Left colon (tissue), 2 donors: ENCODE measurements at regions of chr4 and their contacts with region 1.

Region 1: GRCh38 chr4:159169404-159170302 is 66.8 kb downstream of the RAPGEF2 start:
- DNase-seq: no peak
- ATAC-seq: no peak

Region 2: DNA sequence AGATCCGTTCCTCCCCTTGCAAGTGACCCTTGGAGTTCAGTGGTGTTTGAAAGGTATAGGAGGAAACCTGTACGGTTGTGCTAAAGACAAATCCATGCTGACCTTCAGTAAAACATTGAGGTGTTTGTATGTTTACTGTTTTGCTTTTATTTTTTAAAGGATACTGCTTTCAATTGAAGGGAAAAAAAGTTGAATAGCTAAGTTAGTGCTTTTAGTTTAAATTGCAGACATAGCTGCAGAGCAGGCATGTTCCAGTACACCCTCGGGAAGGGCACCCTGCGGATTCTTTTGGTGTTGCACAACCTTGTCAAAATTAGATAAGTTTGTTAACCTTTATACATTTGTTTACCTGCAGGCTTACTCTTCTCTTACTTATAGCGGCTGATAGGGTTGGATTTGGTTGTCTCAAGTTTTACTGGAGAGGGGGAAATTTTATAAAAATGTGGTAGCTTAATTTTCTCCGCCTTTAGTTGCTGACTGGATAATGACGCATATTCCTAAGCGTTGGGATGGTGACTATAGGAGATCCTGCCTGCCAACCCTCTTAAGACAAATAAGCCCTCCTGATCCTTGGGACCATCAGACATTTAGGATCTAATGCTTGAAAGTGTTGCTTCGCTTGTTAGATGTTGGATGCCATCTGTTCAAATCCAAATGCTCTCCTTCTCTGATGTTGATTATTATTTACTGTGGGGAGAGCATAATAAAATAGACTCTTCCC is 64.8 kb before region 1 on chr4:
- intact Hi-C with region 1: loop called in 1 of 2 experiments (anchors 5 kb)
- DNase-seq: peak; percentile 24 to 31
- ATAC-seq: peak; percentile 16

Region 3: GRCh38 chr4:159117968-159118367 is 51.7 kb before region 1 on chr4:
- intact Hi-C with region 1: no loop called
- DNase-seq: peak in 1 of 2 donors; percentile 11
- ATAC-seq: peak; percentile 93